ENCODE measurements at regions of chr7 and their contacts with region 1.

Region 1: GRCh38 chr7:25894902-25895791 is 256.9 kb upstream of the NFE2L3 start:
- DNase-seq: peak; percentile 75

Region 2: GRCh38 chr7:25812086-25812850 is 82.9 kb before region 1 on chr7:
- CTCF ChIA-PET with region 1: no interaction called
- POLR2A ChIA-PET with region 1: no interaction called
- DNase-seq: no peak

Region 3: GRCh38 chr7:25881317-25882037 is 13.7 kb before region 1 on chr7:
- CTCF ChIA-PET with region 1: interaction called, 12 read pairs
- POLR2A ChIA-PET with region 1: interaction called, 3 read pairs
- DNase-seq: no peak

Region 4: GRCh38 chr7:25918731-25919130 is 23.6 kb after region 1 on chr7:
- CTCF ChIA-PET with region 1: no interaction called
- POLR2A ChIA-PET with region 1: no interaction called
- DNase-seq: no peak

Region 5: DNA sequence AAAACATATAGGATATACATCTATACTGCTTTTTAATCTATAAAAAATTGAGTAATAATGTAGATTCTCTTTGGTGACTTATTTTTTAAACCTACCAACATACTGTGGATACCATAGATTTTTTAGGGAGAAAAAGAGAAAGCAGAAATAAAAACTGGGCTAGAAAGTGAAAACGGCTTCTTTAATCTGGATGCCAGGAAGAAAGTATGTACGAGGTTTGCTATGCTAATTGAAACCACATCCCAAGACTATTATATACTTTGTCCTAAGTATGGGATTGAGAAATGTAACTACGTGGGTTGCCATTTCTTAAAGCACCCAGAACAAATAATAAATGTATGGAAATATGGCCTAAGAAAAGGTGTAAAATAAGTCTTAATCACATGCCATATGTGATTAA is 127.8 kb after region 1 on chr7:
- CTCF ChIA-PET with region 1: no interaction called
- POLR2A ChIA-PET with region 1: no interaction called
- DNase-seq: no peak

Region 6: GRCh38 chr7:26356929-26357798 is 462.0 kb after region 1 on chr7:
- CTCF ChIA-PET with region 1: interaction called, 10 read pairs
- POLR2A ChIA-PET with region 1: no interaction called
- DNase-seq: no peak

Region 7: DNA sequence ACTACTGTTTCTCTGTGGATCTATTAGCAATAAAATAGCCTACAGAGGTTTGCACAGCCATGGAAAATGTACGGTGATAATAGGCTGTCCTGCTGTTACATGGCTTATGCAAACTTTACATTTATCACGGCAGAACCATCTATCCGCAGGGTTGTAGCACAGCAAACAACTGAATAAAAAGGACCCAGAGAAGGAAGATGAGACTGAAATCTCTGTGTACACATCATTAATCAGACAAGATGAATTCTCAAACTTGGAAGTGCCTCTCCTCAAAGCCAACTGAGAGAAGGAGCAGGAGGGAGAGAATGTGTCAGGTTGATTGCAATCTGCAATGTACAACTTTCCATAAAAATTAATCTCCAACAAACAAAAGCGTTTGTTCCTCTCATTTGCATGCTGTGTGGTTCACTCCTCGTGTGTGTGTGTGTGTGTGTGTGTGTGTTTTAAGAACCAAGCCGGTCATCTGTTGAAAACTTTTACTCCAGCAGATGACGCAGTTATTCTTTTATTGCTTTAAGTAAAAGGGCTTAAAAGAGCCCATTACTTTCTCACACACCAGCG is 690.0 kb after region 1 on chr7:
- CTCF ChIA-PET with region 1: no interaction called
- POLR2A ChIA-PET with region 1: no interaction called
- DNase-seq: peak; percentile 34